ENCODE measurements at regions of chr5 and their contacts with region 1.

Region 1: GRCh38 chr5:96934708-96935558 is 947 bp upstream of the LNPEP start:
- DNase-seq: peak; percentile 95 to 98 (median 98)
- H3K4me3 ChIP-seq: peak overlapping the region; percentile 60 to 97
- H3K4me3 Mint-ChIP-seq: peak overlapping the region; percentile 88 to 99 (median 94)
- H3K27ac ChIP-seq: peak overlapping the region; percentile 83
- H3K27ac Mint-ChIP-seq: peak overlapping the region; percentile 93 to 99 (median 97)
- H3K4me1 ChIP-seq: peaks cover 72% of the 10 kb centered on the region
- H3K4me1 Mint-ChIP-seq: peaks cover 43 to 82% (median 61%) of the 10 kb centered on the region in 4 donors
- H3K27me3 ChIP-seq: no peaks in the 10 kb centered on the region
- H3K27me3 Mint-ChIP-seq: no peaks in the 10 kb centered on the region

Region 2: GRCh38 chr5:95554647-95555548 is 1380.0 kb before region 1 on chr5 and contains the starts of genes ARSK and SKIC3:
- CTCF ChIA-PET with region 1: no interaction called
- POLR2A ChIA-PET with region 1: no interaction called
- intact Hi-C with region 1: loop called (anchors 10 kb)
- DNase-seq: peak; percentile 95 to 98 (median 97)
- H3K4me3 ChIP-seq: peak within 1 kb of the TSS; percentile 61 to 84
- H3K4me3 Mint-ChIP-seq: peak within 1 kb of the TSS; percentile 92 to 100 (median 98)
- H3K27ac ChIP-seq: peak within 1 kb of the TSS; percentile 70
- H3K27ac Mint-ChIP-seq: peak within 1 kb of the TSS; percentile 89 to 99 (median 96)
- H3K4me1 ChIP-seq: peaks cover 37% of the 10 kb centered on the region
- H3K4me1 Mint-ChIP-seq: peaks cover 32 to 53% (median 42%) of the 10 kb centered on the region in 4 donors
- H3K27me3 ChIP-seq: no peaks in the 10 kb centered on the region
- H3K27me3 Mint-ChIP-seq: no peaks in the 10 kb centered on the region
- total RNA-seq, gene ARSK: 6.8 to 7.4 TPM
- total RNA-seq, gene SKIC3: 94.6 to 99.9 TPM

Region 3: DNA sequence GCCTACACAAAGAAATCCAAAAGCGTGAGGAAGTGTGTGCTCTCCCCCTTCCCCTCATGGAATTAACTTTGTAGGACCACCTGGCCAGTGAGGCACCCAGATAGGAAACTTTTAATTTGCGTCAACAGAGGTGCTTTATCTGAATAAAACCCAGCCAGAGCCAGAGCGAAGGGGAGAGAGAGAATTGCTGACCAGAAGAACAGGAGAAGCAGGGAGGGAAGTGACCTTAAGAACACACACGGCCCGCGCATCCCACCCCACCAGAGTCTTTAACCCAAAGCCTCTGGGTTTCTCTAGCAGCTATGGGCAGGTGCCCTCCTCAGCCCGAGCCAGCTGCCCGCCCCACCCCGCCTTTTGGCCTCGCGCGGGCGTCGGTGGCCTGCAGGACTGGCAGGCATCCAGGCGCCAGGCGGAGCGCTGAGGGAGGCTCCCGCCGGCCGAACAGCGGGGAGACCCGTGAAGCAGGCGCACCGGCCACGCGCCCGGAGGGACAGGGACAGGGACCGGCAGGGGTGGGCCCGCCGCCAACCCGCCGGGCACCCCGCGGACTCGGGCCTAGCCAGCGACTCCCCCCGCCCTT is 127.8 kb before region 1 on chr5:
- CTCF ChIA-PET with region 1: interaction called, 5 read pairs
- POLR2A ChIA-PET with region 1: interaction called, 16 read pairs
- intact Hi-C with region 1: loop called (anchors 1 kb)
- DNase-seq: no peak
- H3K4me3 ChIP-seq: peak overlapping the region; percentile 48 to 68
- H3K4me3 Mint-ChIP-seq: peak overlapping the region; percentile 92 to 100 (median 98)
- H3K27ac ChIP-seq: peak overlapping the region; percentile 86
- H3K27ac Mint-ChIP-seq: peak overlapping the region; percentile 95 to 100 (median 99)
- H3K4me1 ChIP-seq: peaks cover 63% of the 10 kb centered on the region
- H3K4me1 Mint-ChIP-seq: peaks cover 44 to 79% (median 64%) of the 10 kb centered on the region in 4 donors
- H3K27me3 ChIP-seq: no peaks in the 10 kb centered on the region
- H3K27me3 Mint-ChIP-seq: peaks cover 0 to 3% of the 10 kb centered on the region in 2 donors

Region 4: DNA sequence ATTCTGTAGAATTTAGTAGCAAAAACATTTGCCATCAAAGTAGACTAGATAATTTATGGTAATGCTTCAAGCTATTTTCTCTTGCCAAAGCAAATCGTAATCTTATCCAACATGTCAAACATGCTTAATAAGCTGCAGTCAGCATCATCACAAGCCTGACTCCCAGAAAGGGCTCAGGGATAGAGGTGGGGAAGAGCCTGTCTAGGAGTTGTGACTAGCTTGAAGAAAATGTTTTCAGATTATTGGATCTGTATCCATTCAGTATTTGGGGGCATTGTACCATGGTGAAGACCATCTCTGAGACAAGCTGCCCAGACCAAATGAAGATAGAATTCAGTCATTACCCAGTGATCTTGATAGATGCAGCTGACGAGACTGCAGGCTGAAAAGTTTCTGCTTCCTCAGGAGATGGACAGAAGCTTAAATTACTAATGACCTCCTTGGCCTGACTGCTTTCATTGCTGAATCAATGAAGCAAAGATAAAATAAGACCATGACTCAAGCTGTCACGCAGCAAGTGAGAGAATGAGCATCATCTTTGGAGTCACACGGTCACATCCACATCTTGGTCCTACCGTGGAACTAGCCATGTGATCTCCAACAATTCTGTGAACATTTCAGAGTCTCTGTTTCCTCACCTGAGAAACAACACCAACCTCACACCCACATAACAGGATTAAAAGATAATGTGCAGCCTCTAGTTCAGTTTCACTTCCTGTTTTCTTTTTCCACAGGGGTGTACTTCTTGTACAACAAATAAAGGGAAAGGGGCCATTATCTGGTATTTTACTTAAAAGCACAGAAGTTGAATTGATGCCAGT is 49.2 kb before region 1 on chr5:
- CTCF ChIA-PET with region 1: interaction called, 4 read pairs
- POLR2A ChIA-PET with region 1: interaction called, 13 read pairs
- intact Hi-C with region 1: no loop called
- DNase-seq: peak; percentile 55 to 79 (median 69)
- H3K4me3 ChIP-seq: peak overlapping the region; percentile 8
- H3K4me3 Mint-ChIP-seq: peak overlapping the region; percentile 55 to 85 (median 70)
- H3K27ac ChIP-seq: peak overlapping the region; percentile 43
- H3K27ac Mint-ChIP-seq: peak overlapping the region; percentile 77 to 98 (median 96)
- H3K4me1 ChIP-seq: peaks cover 61% of the 10 kb centered on the region
- H3K4me1 Mint-ChIP-seq: peaks cover 53 to 75% (median 65%) of the 10 kb centered on the region in 4 donors
- H3K27me3 ChIP-seq: no peaks in the 10 kb centered on the region
- H3K27me3 Mint-ChIP-seq: no peaks in the 10 kb centered on the region

Region 5: DNA sequence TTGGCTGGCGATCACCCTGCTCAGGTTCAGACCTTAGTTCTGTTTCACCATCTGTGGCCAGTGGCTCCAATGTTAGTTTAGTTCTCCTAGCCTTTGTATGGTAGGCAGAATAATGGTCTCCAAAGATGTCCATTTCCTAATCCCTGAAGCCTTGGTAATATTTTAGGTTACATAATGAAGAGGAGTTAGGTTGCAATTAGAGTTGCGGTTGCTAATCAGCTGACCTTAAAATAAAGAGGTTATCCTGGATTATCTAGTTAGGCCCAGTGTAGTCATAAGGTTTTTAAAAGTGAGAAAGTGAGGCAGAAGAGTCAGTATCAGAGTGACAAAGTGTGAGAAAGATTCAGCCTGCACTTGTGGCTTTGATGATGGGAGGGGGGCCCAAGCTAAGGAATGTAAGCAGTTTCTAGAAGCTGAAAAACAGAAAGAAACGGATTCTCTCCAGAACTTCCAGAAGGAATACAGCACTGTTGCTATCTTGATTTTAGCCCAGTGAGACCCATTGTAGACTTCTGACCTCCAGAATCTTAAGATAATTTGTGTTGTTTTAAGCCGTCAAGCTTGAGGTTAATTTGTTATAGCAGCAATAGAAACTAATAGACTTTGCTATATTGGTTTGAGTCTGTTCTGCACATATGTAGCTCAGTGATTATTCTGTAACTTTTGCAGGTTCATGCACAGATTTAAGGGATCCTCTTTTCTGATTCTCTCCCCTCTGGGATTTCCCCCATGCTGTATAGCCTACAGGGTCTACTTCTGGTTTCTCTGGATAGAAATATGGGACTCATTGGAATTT is 22.5 kb after region 1 on chr5:
- CTCF ChIA-PET with region 1: interaction called, 7 read pairs
- POLR2A ChIA-PET with region 1: interaction called, 110 read pairs
- intact Hi-C with region 1: loop called (anchors 1 kb)
- DNase-seq: no peak
- H3K4me3 ChIP-seq: no peak overlapping the region
- H3K4me3 Mint-ChIP-seq: peak overlapping the region; percentile 24 to 90 (median 75)
- H3K27ac ChIP-seq: peak overlapping the region; percentile 39
- H3K27ac Mint-ChIP-seq: peak overlapping the region; percentile 62 to 92 (median 92)
- H3K4me1 ChIP-seq: peaks cover 86% of the 10 kb centered on the region
- H3K4me1 Mint-ChIP-seq: peaks cover 59 to 87% (median 75%) of the 10 kb centered on the region in 4 donors
- H3K27me3 ChIP-seq: no peaks in the 10 kb centered on the region
- H3K27me3 Mint-ChIP-seq: no peaks in the 10 kb centered on the region

Region 6: DNA sequence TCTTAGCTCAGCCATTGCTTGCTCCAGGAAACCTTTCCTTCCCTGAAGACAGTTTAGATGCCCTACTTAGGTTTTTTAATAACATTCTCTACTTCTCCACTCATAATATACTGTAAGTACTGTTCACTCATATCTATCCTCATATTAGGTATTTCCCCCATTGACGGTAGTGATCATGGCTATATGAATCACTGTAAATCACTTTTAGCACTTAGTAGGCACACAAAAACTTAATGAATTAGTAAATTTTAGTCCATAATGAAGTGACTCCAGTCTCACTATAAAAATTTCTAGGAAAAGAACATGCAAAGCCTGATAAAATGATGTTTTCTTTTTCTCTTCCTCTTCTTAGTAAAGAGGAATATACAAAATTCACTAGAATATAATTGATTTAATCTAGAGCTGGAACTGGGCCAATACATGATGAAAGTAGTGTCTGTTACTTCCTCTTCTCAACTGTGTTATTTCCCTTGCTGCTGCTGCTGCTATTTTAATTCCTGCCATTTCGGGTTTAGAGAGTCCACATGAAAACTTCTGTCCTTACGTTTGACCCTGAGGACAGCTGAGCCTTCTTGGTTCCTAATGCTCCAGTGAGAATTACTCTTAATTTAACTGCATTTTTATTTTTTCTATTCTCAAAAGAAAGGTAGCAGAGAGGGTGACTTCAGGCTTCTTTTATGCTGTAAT is 74.4 kb after region 1 on chr5:
- CTCF ChIA-PET with region 1: interaction called, 4 read pairs
- POLR2A ChIA-PET with region 1: interaction called, 7 read pairs
- intact Hi-C with region 1: loop called (anchors 2 kb)
- DNase-seq: peak in 4 of 5 donors; percentile 31 to 47 (median 37)
- H3K4me3 ChIP-seq: no peak overlapping the region
- H3K4me3 Mint-ChIP-seq: peak overlapping the region in 5 of 8 donors; percentile 7 to 66 (median 51)
- H3K27ac ChIP-seq: no peak overlapping the region
- H3K27ac Mint-ChIP-seq: peak overlapping the region in 5 of 7 donors; percentile 23 to 87 (median 66)
- H3K4me1 ChIP-seq: peaks cover 24% of the 10 kb centered on the region
- H3K4me1 Mint-ChIP-seq: peaks cover 17 to 32% (median 26%) of the 10 kb centered on the region in 4 donors
- H3K27me3 ChIP-seq: no peaks in the 10 kb centered on the region
- H3K27me3 Mint-ChIP-seq: no peaks in the 10 kb centered on the region

Region 7: DNA sequence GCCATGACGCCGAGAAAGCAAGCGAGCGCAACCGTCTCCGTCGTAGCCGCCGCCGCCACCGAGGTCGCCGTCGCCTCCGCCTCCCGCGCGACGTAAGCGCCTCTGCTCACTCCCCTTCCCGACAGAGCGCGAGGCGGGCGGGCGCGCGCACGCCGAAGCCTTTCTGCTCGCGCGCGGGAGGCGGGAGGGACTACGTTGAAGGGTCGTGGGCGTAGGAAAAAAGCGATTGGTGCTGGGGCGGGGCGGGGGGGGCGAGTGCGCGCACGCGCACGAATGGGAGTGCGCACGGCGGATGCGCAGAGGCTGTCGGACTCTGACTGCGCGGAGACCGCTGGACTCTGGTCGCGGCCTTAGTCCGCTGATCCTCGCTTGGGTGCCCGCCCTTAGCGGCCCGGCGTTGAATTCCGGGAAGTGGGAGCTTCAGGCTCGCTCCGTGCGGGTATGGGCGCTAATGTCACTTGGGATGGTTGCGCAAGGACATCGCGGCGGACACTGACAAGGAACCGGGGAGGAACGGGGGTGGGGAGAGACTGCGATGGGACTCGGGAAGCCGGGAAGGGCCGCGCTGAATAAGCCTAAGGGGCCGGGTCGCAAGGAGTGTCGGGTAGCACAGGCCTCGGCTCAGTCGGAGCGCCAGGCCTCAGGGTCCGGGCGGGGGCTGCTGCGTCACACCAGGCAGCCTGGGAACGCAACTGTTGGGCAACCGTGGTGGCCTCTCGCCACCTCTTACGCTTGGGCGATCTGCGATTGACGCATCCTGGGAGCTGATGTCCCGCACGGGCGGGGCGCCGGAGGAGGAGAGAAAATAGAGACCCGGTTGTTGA is 1994.2 kb after region 1 on chr5 and contains the start of gene CHD1:
- CTCF ChIA-PET with region 1: no interaction called
- POLR2A ChIA-PET with region 1: interaction called, 7 read pairs
- intact Hi-C with region 1: loop called (anchors 1 kb)
- DNase-seq: peak; percentile 94 to 99 (median 98)
- H3K4me3 ChIP-seq: peak within 1 kb of the TSS; percentile 48 to 84
- H3K4me3 Mint-ChIP-seq: peak within 1 kb of the TSS; percentile 93 to 99 (median 98)
- H3K27ac ChIP-seq: peak within 1 kb of the TSS; percentile 100
- H3K27ac Mint-ChIP-seq: peak within 1 kb of the TSS; percentile 99 to 100 (median 100)
- H3K4me1 ChIP-seq: peaks cover 72% of the 10 kb centered on the region
- H3K4me1 Mint-ChIP-seq: peaks cover 45 to 90% (median 55%) of the 10 kb centered on the region in 4 donors
- H3K27me3 ChIP-seq: no peaks in the 10 kb centered on the region
- H3K27me3 Mint-ChIP-seq: no peaks in the 10 kb centered on the region
- total RNA-seq, gene CHD1: 91.2 to 93.9 TPM